ENCODE measurements at regions of chr19 and their contacts with region 1.

Region 1: DNA sequence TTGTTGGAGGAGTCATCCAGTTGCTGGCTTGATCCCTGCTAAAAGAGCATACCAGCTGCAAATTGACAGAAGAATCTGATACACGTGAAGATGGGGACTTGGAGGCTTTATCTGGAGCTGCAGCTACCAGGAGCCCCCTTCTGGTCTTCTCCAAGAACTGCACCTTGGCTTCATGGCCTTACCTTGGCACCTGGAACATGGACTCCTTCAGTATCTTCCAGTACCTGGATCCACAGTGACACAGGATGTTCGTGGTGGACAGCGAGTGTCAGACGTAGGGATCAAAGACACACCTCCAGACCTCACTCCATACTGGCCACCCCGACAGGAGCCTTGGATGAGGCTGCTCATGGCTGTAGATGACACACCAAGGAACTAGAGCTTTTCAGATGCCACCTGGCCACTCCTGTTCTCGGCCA is 9.9 kb upstream of the ACSBG2 start:
- DNase-seq: peak; percentile 47 to 56
- H3K4me3 ChIP-seq: no peak overlapping the region
- H3K27ac ChIP-seq: no peak overlapping the region
- H3K4me1 ChIP-seq: no peaks in the 10 kb centered on the region
- H3K27me3 ChIP-seq: no peaks in the 10 kb centered on the region; a peak in 1 of 7 replicates
- CTCF ChIP-seq: peak; percentile 74 to 92 (median 87)
- EP300 ChIP-seq: no peak
- POLR2A ChIP-seq: no peak
- RAD21 ChIP-seq: peak; percentile 86 to 90

Region 2: DNA sequence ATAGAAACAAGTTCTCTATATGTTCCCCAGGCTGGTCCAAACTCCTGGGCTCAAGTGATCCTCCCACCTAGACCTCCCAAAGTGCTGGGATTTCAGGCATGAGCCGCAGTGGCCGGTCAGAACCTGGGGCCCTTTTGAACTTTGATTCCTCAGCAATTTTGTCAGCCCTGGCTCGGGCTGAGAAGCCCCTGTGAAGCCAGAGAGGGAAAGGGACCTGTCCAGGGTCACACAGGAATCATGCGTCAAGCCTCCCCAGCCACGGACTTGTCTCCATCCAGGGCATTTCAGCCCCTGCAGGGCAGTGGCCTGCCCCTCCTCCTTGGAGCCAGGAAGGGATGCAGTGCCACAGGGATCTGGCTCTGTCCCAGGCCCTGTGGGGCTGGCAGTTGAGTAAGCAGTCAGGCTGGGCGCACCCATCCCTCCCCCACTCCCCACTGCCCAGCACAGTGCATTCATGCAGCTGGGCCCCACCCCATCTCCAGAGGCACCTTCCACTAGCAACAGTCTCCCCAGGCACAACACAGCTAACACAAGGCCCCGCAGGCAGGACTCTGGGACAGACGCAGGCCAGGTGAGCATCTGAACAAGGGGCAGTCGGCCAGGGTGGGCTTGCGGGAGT is 211.7 kb before region 1 on chr19 and contains the start of gene CAPS:
- CTCF ChIA-PET with region 1: no interaction called
- POLR2A ChIA-PET with region 1: no interaction called
- DNase-seq: no peak
- H3K4me3 ChIP-seq: no peak within 1 kb of the TSS
- H3K27ac ChIP-seq: no peak within 1 kb of the TSS
- H3K4me1 ChIP-seq: no peaks in the 10 kb centered on the region
- H3K27me3 ChIP-seq: no peaks in the 10 kb centered on the region
- CTCF ChIP-seq: no peak
- EP300 ChIP-seq: no peak
- POLR2A ChIP-seq: no peak
- RAD21 ChIP-seq: no peak
- total RNA-seq, gene CAPS: 1.8 and 2.1 TPM in 2 replicates

Region 3: DNA sequence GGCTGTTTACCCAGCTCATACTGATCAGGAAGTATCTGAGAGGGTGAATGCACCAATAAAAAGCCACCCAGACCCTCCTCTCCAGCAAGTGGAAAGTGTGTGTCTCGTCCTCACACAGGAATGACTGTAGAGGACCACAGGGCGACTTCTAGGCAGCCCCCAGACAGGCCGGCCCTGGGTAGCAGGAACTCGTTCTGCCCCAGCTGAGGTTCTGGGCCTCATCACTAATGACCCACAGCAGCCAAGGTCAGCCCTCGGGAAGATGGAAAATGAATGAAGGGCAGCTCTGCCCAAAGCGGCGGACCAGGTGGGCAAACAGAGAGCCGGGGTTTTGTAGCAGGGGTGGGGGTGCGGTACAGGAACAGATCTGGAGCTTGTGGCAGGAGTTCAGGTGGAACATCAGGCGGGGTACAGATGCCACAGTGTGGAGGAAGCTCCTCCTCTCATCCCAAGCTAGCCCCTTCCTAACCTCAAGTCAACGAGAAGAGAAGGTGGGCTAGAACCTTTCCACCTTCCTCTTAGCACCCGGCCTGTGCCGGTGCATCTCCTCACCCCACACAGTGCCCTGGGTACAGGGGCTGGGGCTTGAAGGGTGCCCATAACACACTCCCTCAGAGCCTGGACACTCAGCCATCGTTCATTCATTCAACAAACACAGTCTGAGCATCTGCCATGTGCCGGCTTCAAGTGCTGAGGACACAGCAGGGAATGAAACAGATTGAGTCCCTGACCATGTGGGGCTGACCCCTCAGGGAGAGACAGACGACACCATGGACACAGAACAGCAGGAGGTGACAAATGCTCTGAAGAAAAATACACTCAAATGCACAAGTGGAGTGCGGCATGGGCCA is 51.5 kb before region 1 on chr19:
- CTCF ChIA-PET with region 1: interaction called, 10 read pairs
- POLR2A ChIA-PET with region 1: no interaction called
- DNase-seq: no peak
- H3K4me3 ChIP-seq: no peak overlapping the region
- H3K27ac ChIP-seq: no peak overlapping the region
- H3K4me1 ChIP-seq: no peaks in the 10 kb centered on the region; a peak in 1 of 7 replicates
- H3K27me3 ChIP-seq: no peaks in the 10 kb centered on the region
- CTCF ChIP-seq: no peak
- EP300 ChIP-seq: no peak
- POLR2A ChIP-seq: no peak
- RAD21 ChIP-seq: no peak

Region 4: DNA sequence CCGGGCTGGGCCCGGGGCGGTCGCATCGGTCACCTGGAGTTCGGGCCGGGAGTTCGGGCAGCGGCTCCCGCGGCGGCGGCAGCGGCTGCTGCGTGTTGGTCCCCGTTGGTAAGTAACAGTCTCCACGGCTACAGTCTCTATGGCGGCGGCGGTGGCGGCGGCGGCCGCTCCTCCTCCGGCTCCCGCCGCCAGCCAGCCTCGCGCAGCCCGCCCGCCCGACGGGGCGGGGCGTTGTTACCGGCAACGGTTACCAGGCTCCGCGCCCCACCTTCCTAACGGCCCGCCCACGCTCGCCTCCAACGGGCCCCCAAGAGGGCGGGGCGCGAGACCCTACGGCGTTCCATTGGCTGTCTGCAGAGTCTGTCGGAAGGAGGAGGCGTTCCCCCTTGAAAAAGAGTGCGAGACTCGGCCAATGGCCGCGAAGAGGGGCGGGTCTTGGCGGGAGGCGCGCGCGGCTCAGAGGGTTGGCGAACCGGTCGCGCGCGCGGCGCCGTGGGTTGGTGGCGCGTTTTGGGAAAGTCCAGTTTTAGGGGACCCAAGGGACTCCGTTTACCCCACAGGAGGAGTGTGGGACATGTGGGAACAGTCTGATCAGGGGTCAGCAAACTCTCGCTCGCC is 15.1 kb before region 1 on chr19 and contains the start of gene RFX2:
- CTCF ChIA-PET with region 1: interaction called, 37 read pairs
- POLR2A ChIA-PET with region 1: no interaction called
- DNase-seq: peak; percentile 91 to 97
- H3K4me3 ChIP-seq: peak within 1 kb of the TSS; percentile 68 to 86 (median 70)
- H3K27ac ChIP-seq: no peak within 1 kb of the TSS
- H3K4me1 ChIP-seq: no peaks in the 10 kb centered on the region; a peak in 2 of 7 replicates
- H3K27me3 ChIP-seq: peaks cover 11 to 26% (median 22%) of the 10 kb centered on the region in 4 experiments
- CTCF ChIP-seq: no peak
- EP300 ChIP-seq: 0 out of 3 replicates have a peak, but pooled peaks of 1 of the 2 experiments have one; percentile 29
- POLR2A ChIP-seq: no peak; a peak in 1 of 3 replicates
- RAD21 ChIP-seq: no peak
- total RNA-seq, gene RFX2: 4.8 and 5.5 TPM in 2 replicates

Measured in H1 (cell line).